ENCODE measurements at regions of chr17 and their contacts with region 1.

Region 1: GRCh38 chr17:82065638-82066303 is at the start of gene DUS1L:
- DNase-seq: peak; percentile 45
- H3K4me3 Mint-ChIP-seq: peak within 1 kb of the TSS; percentile 70
- H3K27ac Mint-ChIP-seq: peak within 1 kb of the TSS; percentile 83
- H3K4me1 Mint-ChIP-seq: no peaks in the 10 kb centered on the region
- H3K27me3 Mint-ChIP-seq: no peaks in the 10 kb centered on the region
- CTCF ChIP-seq: no peak
- total RNA-seq, gene DUS1L: 116 and 123 TPM in 2 replicates

Region 2: DNA sequence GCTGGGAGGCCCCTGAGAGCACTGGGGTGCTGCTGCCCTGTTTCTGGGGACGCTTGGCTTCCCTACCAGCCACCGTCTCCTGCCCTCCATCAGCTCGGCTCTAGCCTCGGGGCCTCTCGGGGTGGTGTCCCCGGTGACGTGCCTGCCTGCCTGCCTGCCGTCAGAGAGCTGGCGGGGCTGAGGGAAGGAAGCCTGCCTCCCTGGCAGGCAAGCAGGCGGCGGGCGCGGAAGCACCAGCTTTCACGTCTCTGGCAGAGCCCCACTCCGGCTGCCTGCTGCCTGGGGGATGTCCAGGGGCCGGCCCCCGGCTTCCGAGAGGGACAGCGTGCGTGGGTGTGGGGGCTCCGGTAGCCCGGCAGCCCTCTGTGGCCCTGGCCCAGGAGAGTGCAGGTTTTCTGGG is 52.4 kb before region 1 on chr17:
- CTCF ChIA-PET with region 1: no interaction called
- POLR2A ChIA-PET with region 1: no interaction called
- intact Hi-C with region 1: no loop called
- DNase-seq: no peak
- H3K4me3 Mint-ChIP-seq: no peak overlapping the region
- H3K27ac Mint-ChIP-seq: no peak overlapping the region
- H3K4me1 Mint-ChIP-seq: no peaks in the 10 kb centered on the region
- H3K27me3 Mint-ChIP-seq: no peaks in the 10 kb centered on the region
- CTCF ChIP-seq: no peak

Region 3: DNA sequence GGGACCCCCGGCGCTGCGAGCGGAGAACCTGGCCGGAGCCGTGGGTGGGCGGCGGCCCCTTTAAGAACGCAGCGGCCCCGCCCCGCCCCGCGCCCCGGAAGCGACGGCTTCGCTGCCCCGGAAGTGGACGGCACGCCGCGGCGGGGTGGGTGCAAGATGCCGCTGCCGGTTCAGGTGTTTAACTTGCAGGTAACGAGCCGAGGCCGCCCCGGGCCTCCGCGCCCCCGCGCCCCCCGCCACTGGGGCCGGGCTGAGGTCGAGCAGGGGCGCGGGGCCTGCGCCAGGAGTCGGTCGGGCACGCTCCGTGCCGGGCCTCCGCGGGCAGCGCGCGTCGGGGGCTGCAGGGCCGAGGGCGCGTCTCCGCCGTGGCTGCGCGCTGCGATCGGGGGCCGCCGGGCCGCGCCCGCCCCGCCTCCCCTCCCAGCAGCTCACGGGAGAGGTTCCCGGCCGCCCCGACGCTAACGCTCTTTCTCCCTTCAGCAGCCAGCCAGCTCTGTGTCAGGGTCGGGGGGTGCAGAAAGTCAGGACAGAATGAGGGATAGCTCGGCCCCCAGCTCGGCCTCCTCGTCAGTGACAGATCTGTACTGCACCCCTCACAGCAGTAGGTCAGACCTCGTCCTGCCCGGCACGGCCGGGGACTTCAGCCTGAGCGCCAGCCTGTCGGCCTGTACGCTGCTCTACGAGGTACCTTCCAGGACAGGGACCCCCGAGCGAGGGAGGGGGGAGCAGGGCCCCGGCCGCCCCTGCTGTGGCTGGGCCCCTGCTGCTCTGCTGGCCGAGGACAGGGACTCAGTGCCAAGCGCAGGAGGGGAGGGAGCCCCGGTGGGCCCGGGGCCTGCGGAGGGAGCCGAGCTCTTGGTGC is 13.8 kb before region 1 on chr17 and contains the starts of genes GPS1 and RFNG:
- CTCF ChIA-PET with region 1: no interaction called
- POLR2A ChIA-PET with region 1: interaction called, 14 read pairs
- intact Hi-C with region 1: no loop called
- DNase-seq: peak; percentile 59
- H3K4me3 Mint-ChIP-seq: peak within 1 kb of the TSS; percentile 75
- H3K27ac Mint-ChIP-seq: no peak within 1 kb of the TSS
- H3K4me1 Mint-ChIP-seq: no peaks in the 10 kb centered on the region
- H3K27me3 Mint-ChIP-seq: no peaks in the 10 kb centered on the region
- CTCF ChIP-seq: no peak
- total RNA-seq, gene GPS1: 96.6 and 100 TPM in 2 replicates
- total RNA-seq, gene RFNG: 37.9 and 38.0 TPM in 2 replicates

Region 4: GRCh38 chr17:82077617-82078358 is 12.0 kb after region 1 on chr17:
- CTCF ChIA-PET with region 1: interaction called, 4 read pairs
- POLR2A ChIA-PET with region 1: interaction called, 15 read pairs
- intact Hi-C with region 1: no loop called
- DNase-seq: no peak
- H3K4me3 Mint-ChIP-seq: no peak overlapping the region
- H3K27ac Mint-ChIP-seq: no peak overlapping the region
- H3K4me1 Mint-ChIP-seq: no peaks in the 10 kb centered on the region
- H3K27me3 Mint-ChIP-seq: no peaks in the 10 kb centered on the region
- CTCF ChIP-seq: no peak

Region 5: GRCh38 chr17:82098072-82098821 is 32.5 kb after region 1 on chr17 and contains the start of gene FASN:
- CTCF ChIA-PET with region 1: interaction called, 3 read pairs
- POLR2A ChIA-PET with region 1: interaction called, 15 read pairs
- intact Hi-C with region 1: no loop called
- DNase-seq: peak; percentile 94
- H3K4me3 Mint-ChIP-seq: peak within 1 kb of the TSS; percentile 75
- H3K27ac Mint-ChIP-seq: peak within 1 kb of the TSS; percentile 66
- H3K4me1 Mint-ChIP-seq: no peaks in the 10 kb centered on the region
- H3K27me3 Mint-ChIP-seq: no peaks in the 10 kb centered on the region
- CTCF ChIP-seq: peak; percentile 32
- total RNA-seq, gene FASN: 114 and 120 TPM in 2 replicates

Measured in MCF 10A (cell line).